PC-3 (cell line): ENCODE measurements at regions of chr1 and their contacts with region 1.

Region 1: DNA sequence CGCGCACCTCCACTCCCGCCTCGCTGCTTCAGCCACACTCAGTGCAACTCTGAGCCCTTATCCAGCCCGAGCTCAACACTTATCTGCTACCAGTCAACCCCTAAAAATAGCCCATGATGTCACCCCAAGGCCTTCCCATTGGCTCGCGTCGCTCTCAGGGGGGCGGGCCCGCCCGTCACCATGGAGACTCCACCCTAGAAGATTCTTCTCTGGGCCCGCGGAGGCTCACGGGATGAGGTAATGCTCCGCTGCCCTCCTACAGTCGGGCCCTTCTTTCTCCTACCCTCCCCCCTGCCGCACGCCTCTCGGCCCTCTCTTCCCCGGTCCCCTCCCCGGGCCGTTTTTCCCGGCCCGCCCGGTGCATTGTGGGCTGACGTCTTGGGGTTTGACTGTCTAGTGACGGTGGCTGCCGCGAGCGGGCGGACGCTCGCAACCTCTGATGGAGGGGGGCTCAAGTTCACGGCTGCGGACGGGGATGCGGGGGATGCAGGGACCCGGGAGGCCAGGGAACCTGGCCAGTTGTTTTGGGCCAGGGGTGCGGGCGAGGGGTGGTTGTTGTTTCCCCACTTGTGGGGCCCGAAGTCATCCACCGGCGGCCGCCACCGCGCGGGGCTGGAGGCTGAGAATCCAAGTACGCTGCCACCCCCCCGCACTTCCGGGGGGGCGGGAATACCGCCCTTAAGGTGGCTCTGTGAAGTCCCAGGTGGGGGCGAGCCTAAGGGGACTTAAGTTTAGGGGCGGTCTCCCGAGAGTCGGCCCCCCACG is at the start of gene JUN:
- DNase-seq: peak; percentile 99
- ATAC-seq: peak; percentile 71
- H3K4me3 ChIP-seq: peak within 1 kb of the TSS; percentile 76
- H3K27ac ChIP-seq: peak within 1 kb of the TSS; percentile 84
- H3K4me1 ChIP-seq: peaks cover 27% of the 10 kb centered on the region
- H3K27me3 ChIP-seq: no peaks in the 10 kb centered on the region
- CTCF ChIP-seq: no peak
- total RNA-seq, gene JUN: 73.6 and 95.1 TPM in 2 replicates

Region 2: DNA sequence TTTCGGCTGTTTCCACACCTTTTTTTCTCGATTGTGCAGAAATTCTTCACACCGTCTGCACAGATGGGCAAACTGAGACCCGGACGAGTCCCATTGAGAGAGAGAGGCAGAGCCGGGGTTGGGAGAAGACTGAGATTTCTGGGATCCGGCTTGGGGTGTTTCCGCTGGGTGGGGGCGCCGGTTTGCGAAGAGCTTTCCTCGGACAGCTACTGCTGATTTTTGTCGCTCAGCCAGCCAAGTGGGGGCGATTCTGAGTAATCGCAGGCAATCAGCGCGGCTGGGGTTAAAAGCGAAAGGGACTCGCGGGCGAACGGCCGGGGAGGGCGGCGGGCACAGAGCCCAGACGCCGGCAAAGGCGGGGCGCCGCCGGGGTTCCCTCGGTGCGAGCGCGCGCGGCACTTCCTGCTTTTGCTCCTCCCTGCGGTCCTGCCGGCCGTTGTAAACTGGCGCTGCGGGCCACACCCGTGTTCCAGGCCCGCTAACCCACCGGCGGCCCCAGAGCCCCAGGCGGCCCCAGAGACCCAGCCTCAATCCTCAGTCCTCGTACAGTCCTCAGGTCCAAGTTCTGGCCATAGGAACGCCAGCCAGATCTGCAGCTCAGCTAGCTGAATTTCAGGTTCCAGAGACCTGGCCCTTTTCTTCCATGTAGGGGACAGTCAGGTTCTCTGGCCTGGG is 32.0 kb after region 1 on chr1:
- CTCF ChIA-PET with region 1: no interaction called
- POLR2A ChIA-PET with region 1: interaction called, 10 read pairs
- intact Hi-C with region 1: loop called (anchors 1 kb)
- DNase-seq: peak; percentile 89
- ATAC-seq: peak; percentile 55
- H3K4me3 ChIP-seq: peak overlapping the region; percentile 90
- H3K27ac ChIP-seq: peak overlapping the region; percentile 89
- H3K4me1 ChIP-seq: peaks cover 59% of the 10 kb centered on the region
- H3K27me3 ChIP-seq: no peaks in the 10 kb centered on the region
- CTCF ChIP-seq: peak; percentile 11; the same call in 1 of the 2 replicates

Region 3: GRCh38 chr1:58903514-58904298 is 119.5 kb after region 1 on chr1:
- CTCF ChIA-PET with region 1: interaction called, 7 read pairs
- POLR2A ChIA-PET with region 1: interaction called, 5 read pairs
- intact Hi-C with region 1: loop called (anchors 1 kb)
- DNase-seq: peak; percentile 87
- ATAC-seq: peak; percentile 86
- H3K4me3 ChIP-seq: peak overlapping the region; percentile 78
- H3K27ac ChIP-seq: peak overlapping the region; percentile 92
- H3K4me1 ChIP-seq: peaks cover 30% of the 10 kb centered on the region
- H3K27me3 ChIP-seq: no peaks in the 10 kb centered on the region
- CTCF ChIP-seq: no peak

Region 4: GRCh38 chr1:59146651-59147358 is 362.6 kb after region 1 on chr1:
- CTCF ChIA-PET with region 1: no interaction called
- POLR2A ChIA-PET with region 1: no interaction called
- intact Hi-C with region 1: loop called (anchors 1 kb)
- DNase-seq: peak; percentile 46
- ATAC-seq: peak; percentile 11
- H3K4me3 ChIP-seq: peak overlapping the region; percentile 68
- H3K27ac ChIP-seq: peak overlapping the region; percentile 31
- H3K4me1 ChIP-seq: peaks cover 61% of the 10 kb centered on the region
- H3K27me3 ChIP-seq: no peaks in the 10 kb centered on the region
- CTCF ChIP-seq: no peak

Region 5: GRCh38 chr1:59484096-59484495 is 699.9 kb after region 1 on chr1:
- CTCF ChIA-PET with region 1: no interaction called
- POLR2A ChIA-PET with region 1: no interaction called
- intact Hi-C with region 1: loop called (anchors 5 kb)
- DNase-seq: peak; percentile 85
- ATAC-seq: peak; percentile 67
- H3K4me3 ChIP-seq: no peak overlapping the region
- H3K27ac ChIP-seq: peak overlapping the region; percentile 55
- H3K4me1 ChIP-seq: peaks cover 55% of the 10 kb centered on the region
- H3K27me3 ChIP-seq: no peaks in the 10 kb centered on the region
- CTCF ChIP-seq: no peak

Region 6: GRCh38 chr1:59699227-59699847 is 915.2 kb after region 1 on chr1:
- CTCF ChIA-PET with region 1: no interaction called
- POLR2A ChIA-PET with region 1: no interaction called
- intact Hi-C with region 1: loop called (anchors 1 kb)
- DNase-seq: peak; percentile 65
- ATAC-seq: peak; percentile 49
- H3K4me3 ChIP-seq: no peak overlapping the region
- H3K27ac ChIP-seq: no peak overlapping the region
- H3K4me1 ChIP-seq: no peaks in the 10 kb centered on the region
- H3K27me3 ChIP-seq: no peaks in the 10 kb centered on the region
- CTCF ChIP-seq: peak; percentile 94